Natural killer cell (primary cell): ENCODE measurements at regions of chr6 and their contacts with region 1.

Region 1: GRCh38 chr6:35669451-35670045 is 19.2 kb downstream of the FKBP5 start:
- DNase-seq: peak in 1 of 2 donors; percentile 64
- ATAC-seq: peak; percentile 63 to 79 (median 74)
- H3K4me3 ChIP-seq: peak overlapping the region; percentile 13
- H3K4me3 Mint-ChIP-seq: peak overlapping the region; percentile 87
- H3K27ac ChIP-seq: peak overlapping the region; percentile 54
- H3K27ac Mint-ChIP-seq: peak overlapping the region; percentile 82 to 90
- H3K4me1 ChIP-seq: peaks cover 20% of the 10 kb centered on the region
- H3K4me1 Mint-ChIP-seq: peaks cover 30 to 36% of the 10 kb centered on the region in 2 donors
- H3K27me3 ChIP-seq: no peaks in the 10 kb centered on the region
- H3K27me3 Mint-ChIP-seq: no peaks in the 10 kb centered on the region
- CTCF ChIP-seq: no peak

Region 2: GRCh38 chr6:35688581-35689322 is 19.2 kb after region 1 on chr6 and contains the start of gene FKBP5:
- intact Hi-C with region 1: loop called (anchors 2 kb)
- DNase-seq: peak; percentile 89 to 92
- ATAC-seq: peak; percentile 94 to 98 (median 95)
- H3K4me3 ChIP-seq: peak within 1 kb of the TSS; percentile 67
- H3K4me3 Mint-ChIP-seq: peak within 1 kb of the TSS; percentile 99
- H3K27ac ChIP-seq: peak within 1 kb of the TSS; percentile 58
- H3K27ac Mint-ChIP-seq: peak within 1 kb of the TSS; percentile 84 to 96
- H3K4me1 ChIP-seq: peaks cover 6% of the 10 kb centered on the region
- H3K4me1 Mint-ChIP-seq: peaks cover 17 to 22% of the 10 kb centered on the region in 2 donors
- H3K27me3 ChIP-seq: no peaks in the 10 kb centered on the region
- H3K27me3 Mint-ChIP-seq: no peaks in the 10 kb centered on the region
- CTCF ChIP-seq: no peak
- total RNA-seq, gene FKBP5: 15.5 to 30.2 (median 27.3) TPM